Transverse colon (tissue), 4 donors: ENCODE measurements at regions of chr4 and their contacts with region 1.

Region 1: DNA sequence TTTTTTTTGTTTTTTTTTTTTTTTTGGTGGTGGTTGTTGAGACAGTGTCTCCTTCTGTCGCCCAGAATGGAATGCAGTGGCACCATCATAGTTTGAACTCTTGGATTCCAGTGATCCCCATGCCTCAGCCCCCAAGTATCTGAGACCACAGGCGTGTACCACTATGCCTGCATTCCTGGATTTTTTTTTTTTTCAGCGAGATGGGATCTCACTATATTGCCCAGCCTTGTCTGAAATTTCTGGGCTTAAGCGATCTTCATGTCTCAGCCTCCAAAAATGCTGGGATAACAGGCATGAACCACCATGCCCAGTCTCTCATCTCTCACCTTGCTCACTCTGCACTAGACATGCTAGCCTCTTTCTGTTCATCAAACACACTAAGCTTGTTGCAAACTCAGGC is 104.0 kb downstream of the UBE2K start:
- DNase-seq: no peak
- H3K4me3 ChIP-seq: no peak overlapping the region
- H3K27ac ChIP-seq: no peak overlapping the region
- H3K4me1 ChIP-seq: no peaks in the 10 kb centered on the region
- H3K27me3 ChIP-seq: no peaks in the 10 kb centered on the region
- CTCF ChIP-seq: no peak
- EP300 ChIP-seq: no peak
- POLR2A ChIP-seq: no peak

Region 2: GRCh38 chr4:39840027-39840426 is 38.1 kb after region 1 on chr4:
- in situ Hi-C with region 1: no loop called
- intact Hi-C with region 1: loop called (anchors 1 kb)
- DNase-seq: no peak
- H3K4me3 ChIP-seq: no peak overlapping the region
- H3K27ac ChIP-seq: no peak overlapping the region
- H3K4me1 ChIP-seq: no peaks in the 10 kb centered on the region
- H3K27me3 ChIP-seq: no peaks in the 10 kb centered on the region
- CTCF ChIP-seq: no peak
- EP300 ChIP-seq: no peak
- POLR2A ChIP-seq: no peak